CD14-positive monocyte (primary cell): ENCODE measurements at regions of chr18 and their contacts with region 1.

Region 1: DNA sequence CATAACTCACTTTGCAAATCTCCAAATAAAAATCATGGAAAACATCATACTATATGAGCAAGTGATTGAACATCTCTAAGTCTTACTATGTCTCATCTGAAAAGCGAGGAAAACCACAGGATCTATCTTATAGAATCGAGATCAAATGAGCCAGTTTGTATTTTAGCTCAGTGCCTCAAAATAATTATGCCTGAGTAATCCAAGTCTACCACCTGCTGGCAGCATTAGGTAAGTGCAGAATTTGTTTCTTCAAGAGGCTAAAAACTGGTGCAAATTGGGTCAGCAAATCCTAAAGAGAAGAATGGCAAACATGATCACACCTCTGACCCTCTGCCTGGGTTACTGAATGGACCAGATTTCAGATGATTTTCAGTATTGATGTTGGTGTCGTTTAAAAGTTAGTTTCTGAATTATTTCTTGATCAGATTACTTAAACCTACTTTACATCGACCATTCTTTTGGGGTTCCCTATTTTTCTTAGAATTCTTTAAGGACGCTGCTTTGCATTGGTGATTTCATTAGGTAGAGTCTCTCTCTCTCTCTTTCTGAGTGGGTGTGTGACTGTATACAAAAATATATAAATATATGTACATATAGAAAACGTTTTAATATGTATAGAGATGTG is 12.7 kb upstream of the FHOD3 start:
- DNase-seq: peak; percentile 22 to 50 (median 42)
- H3K4me3 ChIP-seq: no peak overlapping the region
- H3K4me3 Mint-ChIP-seq: no peak overlapping the region
- H3K27ac ChIP-seq: no peak overlapping the region
- H3K27ac Mint-ChIP-seq: no peak overlapping the region
- H3K4me1 ChIP-seq: no peaks in the 10 kb centered on the region
- H3K4me1 Mint-ChIP-seq: no peaks in the 10 kb centered on the region
- H3K27me3 ChIP-seq: peaks cover under 1 to 4% of the 10 kb centered on the region in 2 donors
- H3K27me3 Mint-ChIP-seq: peaks cover 11 to 15% (median 14%) of the 10 kb centered on the region in 3 donors
- CTCF ChIP-seq: peak; percentile 80

Region 2: DNA sequence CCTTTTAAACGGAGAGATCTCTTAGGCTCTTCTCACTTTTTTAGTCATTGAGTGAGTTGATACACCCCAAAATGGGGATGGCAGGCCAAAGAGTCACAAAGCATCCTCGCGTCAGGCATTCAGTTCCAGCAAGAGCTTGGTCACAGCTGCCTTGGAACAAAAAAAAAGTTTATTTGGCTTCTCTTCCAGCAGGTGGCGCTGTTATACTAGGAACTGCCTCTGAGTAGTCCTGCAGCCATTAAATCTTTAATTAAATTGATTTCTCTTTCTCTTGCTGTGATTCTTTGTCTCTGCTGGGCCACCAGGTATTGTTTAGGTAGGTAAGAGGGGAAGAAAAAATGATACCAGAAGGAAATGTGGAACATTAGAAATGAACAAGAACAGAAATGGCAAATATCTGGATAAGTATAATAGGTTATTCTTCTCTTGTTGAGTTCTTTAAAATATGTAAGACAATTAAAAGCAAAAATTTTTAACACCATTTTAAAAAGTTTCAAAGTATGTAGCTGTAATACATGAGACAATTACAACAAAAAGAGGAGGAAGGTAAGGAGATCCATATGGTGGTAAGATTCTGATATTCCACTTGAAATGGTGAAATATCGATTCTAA is 528.2 kb before region 1 on chr18:
- intact Hi-C with region 1: loop called (anchors 10 kb)
- DNase-seq: peak; percentile 44 to 66 (median 65)
- H3K4me3 ChIP-seq: no peak overlapping the region
- H3K4me3 Mint-ChIP-seq: no peak overlapping the region
- H3K27ac ChIP-seq: no peak overlapping the region
- H3K27ac Mint-ChIP-seq: no peak overlapping the region
- H3K4me1 ChIP-seq: peaks cover 0 to 4% of the 10 kb centered on the region in 2 donors
- H3K4me1 Mint-ChIP-seq: peaks cover 7% of the 10 kb centered on the region
- H3K27me3 ChIP-seq: no peaks in the 10 kb centered on the region
- H3K27me3 Mint-ChIP-seq: peaks cover 0 to 9% (median 3%) of the 10 kb centered on the region in 3 donors
- CTCF ChIP-seq: peak; percentile 81

Region 3: GRCh38 chr18:36015629-36016028 is 269.2 kb before region 1 on chr18:
- intact Hi-C with region 1: loop called (anchors 5 kb)
- DNase-seq: no peak
- H3K4me3 ChIP-seq: no peak overlapping the region
- H3K4me3 Mint-ChIP-seq: no peak overlapping the region
- H3K27ac ChIP-seq: no peak overlapping the region
- H3K27ac Mint-ChIP-seq: no peak overlapping the region
- H3K4me1 ChIP-seq: no peaks in the 10 kb centered on the region
- H3K4me1 Mint-ChIP-seq: peaks cover 5% of the 10 kb centered on the region
- H3K27me3 ChIP-seq: no peaks in the 10 kb centered on the region
- H3K27me3 Mint-ChIP-seq: no peaks in the 10 kb centered on the region
- CTCF ChIP-seq: no peak

Region 4: DNA sequence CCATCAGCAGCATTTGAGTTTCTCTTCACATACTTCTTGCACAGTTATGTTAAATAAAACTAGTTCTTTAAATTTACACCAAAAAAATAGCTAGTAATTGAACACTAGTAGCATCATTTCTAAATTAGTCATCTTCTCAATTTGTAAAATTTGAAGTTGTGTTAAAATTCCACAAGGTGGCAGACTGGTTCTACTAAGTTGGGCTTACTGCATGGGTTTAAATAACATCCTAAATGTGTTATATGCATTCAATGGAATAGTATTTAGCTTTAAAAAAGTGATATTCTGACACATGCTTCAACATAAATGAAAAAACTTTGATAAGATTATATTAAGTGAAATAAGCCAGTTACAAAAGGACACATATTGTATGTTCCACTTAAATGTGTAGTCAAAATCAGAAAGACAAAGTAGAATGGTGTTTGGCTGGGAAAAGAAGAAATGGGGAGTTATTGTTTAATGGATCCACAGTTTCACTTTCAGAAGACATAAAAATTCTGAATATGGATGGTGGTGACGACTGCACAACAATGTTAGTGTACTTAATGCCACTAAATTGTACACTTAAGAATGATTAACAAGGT is 188.8 kb before region 1 on chr18:
- intact Hi-C with region 1: loop called (anchors 5 kb)
- DNase-seq: peak; percentile 16 to 54 (median 47)
- H3K4me3 ChIP-seq: no peak overlapping the region
- H3K4me3 Mint-ChIP-seq: no peak overlapping the region
- H3K27ac ChIP-seq: no peak overlapping the region
- H3K27ac Mint-ChIP-seq: no peak overlapping the region
- H3K4me1 ChIP-seq: no peaks in the 10 kb centered on the region
- H3K4me1 Mint-ChIP-seq: no peaks in the 10 kb centered on the region
- H3K27me3 ChIP-seq: no peaks in the 10 kb centered on the region
- H3K27me3 Mint-ChIP-seq: peaks cover 0 to 3% (median 0%) of the 10 kb centered on the region in 3 donors
- CTCF ChIP-seq: peak; percentile 82

Region 5: DNA sequence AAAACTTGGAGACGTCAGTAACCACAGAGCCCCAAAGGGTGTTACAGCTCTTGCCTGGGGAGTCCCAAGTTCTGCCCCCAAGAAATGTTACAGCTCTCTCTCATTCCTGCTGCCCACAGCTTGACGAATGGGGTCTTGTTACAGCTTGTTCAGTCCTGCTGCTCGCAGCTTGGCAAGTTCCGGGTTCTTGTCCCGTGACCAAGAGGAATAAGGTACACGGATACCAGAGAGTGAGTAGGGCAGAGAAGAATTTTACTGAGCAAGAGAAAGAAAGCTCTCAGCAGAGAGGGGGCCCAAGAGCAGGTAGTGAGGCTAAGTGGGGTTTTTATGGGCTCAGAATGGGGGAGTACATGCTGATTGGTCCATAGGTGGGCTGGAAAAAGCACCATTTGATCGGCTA is 182.8 kb before region 1 on chr18:
- intact Hi-C with region 1: loop called (anchors 5 kb)
- DNase-seq: no peak
- H3K4me3 ChIP-seq: no peak overlapping the region
- H3K4me3 Mint-ChIP-seq: no peak overlapping the region
- H3K27ac ChIP-seq: no peak overlapping the region
- H3K27ac Mint-ChIP-seq: peak overlapping the region in 1 of 7 donors; percentile 64
- H3K4me1 ChIP-seq: no peaks in the 10 kb centered on the region
- H3K4me1 Mint-ChIP-seq: no peaks in the 10 kb centered on the region
- H3K27me3 ChIP-seq: no peaks in the 10 kb centered on the region
- H3K27me3 Mint-ChIP-seq: peaks cover 0 to 6% (median 1%) of the 10 kb centered on the region in 3 donors
- CTCF ChIP-seq: no peak